Endothelial cell of umbilical vein (primary cell): ENCODE measurements at regions of chr16 and their contacts with region 1.

Region 1: DNA sequence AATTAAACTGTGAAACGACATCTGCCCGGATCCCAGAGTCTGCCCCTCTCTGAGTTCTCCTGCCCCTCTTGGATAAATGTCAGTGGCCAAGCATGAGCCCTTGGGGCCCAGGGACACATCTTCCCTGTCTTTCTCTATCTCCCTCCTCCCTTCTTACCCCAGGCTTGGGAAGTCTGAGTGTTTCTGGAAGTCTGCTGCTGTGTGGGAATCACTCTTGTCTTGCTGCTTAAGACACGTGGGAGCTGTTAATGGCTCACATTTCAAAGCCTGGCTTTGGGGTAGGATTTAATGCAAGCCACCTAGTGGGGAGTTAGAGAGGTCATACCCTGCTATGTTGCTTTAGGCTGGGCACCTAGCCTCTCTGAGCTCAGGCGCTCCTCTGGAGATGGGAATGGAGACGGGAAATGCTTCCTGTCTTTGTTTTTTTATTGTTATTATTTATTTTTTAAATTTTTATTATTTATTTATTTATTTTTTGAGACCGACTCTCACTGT is 218.5 kb upstream of the CIBAR2 start:
- DNase-seq: no peak
- H3K4me3 ChIP-seq: no peak overlapping the region
- H3K27ac ChIP-seq: no peak overlapping the region
- H3K4me1 ChIP-seq: peaks cover 30% of the 10 kb centered on the region
- H3K27me3 ChIP-seq: no peaks in the 10 kb centered on the region
- CTCF ChIP-seq: peak; percentile 30 to 40
- POLR2A ChIP-seq: no peak

Region 2: GRCh38 chr16:85305996-85306792 is 24.5 kb before region 1 on chr16:
- CTCF ChIA-PET with region 1: interaction called, 12 read pairs
- POLR2A ChIA-PET with region 1: no interaction called
- dilution Hi-C with region 1: no loop called
- intact Hi-C with region 1: loop called (anchors 2 kb)
- DNase-seq: peak; percentile 92
- H3K4me3 ChIP-seq: no peak overlapping the region
- H3K27ac ChIP-seq: no peak overlapping the region
- H3K4me1 ChIP-seq: peaks cover 14% of the 10 kb centered on the region
- H3K27me3 ChIP-seq: no peaks in the 10 kb centered on the region
- CTCF ChIP-seq: no peak
- POLR2A ChIP-seq: no peak

Region 3: DNA sequence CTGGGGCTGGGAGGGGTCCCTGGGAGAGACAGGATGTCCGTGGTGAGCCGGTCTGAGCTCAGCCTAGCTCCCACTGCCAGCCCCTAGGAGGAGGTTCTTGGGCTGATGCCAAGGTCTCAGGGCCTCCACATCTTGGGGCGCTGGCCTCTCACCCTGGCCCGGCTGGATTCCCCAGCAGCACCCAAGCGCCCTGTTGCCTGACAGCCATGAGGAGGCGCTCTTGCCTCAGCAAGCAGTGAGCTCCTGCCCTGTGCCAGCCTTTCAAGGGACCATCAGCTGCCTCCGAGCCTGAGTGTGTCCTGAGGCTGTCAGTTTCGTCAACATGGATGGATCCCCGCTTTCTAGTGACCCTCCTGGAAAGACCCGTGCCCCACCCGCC is 16.5 kb after region 1 on chr16:
- CTCF ChIA-PET with region 1: interaction called, 13 read pairs
- POLR2A ChIA-PET with region 1: no interaction called
- dilution Hi-C with region 1: no loop called
- intact Hi-C with region 1: loop called (anchors 2 kb)
- DNase-seq: no peak
- H3K4me3 ChIP-seq: no peak overlapping the region
- H3K27ac ChIP-seq: no peak overlapping the region
- H3K4me1 ChIP-seq: peaks cover 5% of the 10 kb centered on the region
- H3K27me3 ChIP-seq: no peaks in the 10 kb centered on the region
- CTCF ChIP-seq: peak in 1 of 2 donors; percentile 30
- POLR2A ChIP-seq: no peak

Region 4: DNA sequence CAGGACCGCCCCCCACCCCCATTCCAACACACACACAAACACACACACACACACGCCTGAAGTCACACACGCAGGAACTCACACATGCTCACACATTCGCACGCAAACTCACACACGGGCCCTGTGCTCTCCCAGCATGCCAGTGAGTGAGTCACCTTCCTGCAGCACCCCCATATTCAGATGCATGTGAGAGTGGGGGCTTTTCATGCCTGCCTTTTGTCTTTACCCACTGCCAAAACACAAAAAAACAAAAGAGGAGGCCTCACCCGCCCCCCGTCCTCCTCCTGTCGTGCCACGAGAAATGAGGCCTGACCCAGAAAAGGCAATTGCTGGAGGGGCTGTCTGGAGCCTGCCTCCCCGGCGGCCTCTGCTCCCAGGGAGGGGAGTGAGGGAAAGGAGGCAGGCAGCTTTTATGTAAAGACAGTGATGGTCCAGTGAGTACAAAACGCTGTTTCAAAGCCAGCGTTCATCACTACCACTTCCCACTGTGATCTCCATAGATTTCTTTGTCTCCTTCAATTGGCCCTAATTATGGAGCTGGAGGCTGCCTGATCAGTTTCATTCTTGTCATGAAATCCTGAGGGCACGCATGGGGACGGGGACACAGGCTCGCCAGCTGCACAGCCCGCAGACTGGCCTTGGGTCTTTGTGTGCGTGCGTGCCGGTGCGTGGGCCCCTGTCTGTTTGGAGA is 252.9 kb after region 1 on chr16:
- CTCF ChIA-PET with region 1: no interaction called
- POLR2A ChIA-PET with region 1: no interaction called
- dilution Hi-C with region 1: no loop called
- intact Hi-C with region 1: no loop called
- DNase-seq: no peak
- H3K4me3 ChIP-seq: no peak overlapping the region
- H3K27ac ChIP-seq: no peak overlapping the region
- H3K4me1 ChIP-seq: no peaks in the 10 kb centered on the region
- H3K27me3 ChIP-seq: no peaks in the 10 kb centered on the region
- CTCF ChIP-seq: no peak
- POLR2A ChIP-seq: no peak